Ascending aorta (tissue), 2 donors: ENCODE measurements at regions of chr1 and their contacts with region 1.

Region 1: DNA sequence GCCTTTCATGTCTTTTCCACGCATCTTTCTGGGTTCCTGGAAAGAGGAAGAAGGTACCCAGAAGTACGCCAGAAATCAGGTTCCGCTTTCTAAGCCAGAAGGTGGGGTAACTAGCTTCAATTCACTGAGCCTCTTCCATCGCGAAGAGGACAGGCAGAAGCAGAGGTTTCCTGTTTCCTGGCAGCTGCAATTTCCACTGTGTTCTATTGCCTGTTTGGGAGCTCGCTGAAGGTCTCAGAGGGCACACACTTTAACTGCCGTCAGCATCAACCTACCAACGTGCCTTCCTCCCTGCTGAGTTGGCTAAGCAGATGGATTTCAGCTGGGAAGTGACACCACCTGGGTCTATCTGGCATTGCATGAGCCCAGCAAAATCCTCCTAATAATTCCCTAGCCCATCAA is 10.0 kb downstream of the NCF2 start:
- DNase-seq: peak; percentile 27 to 65
- H3K4me3 ChIP-seq: no peak overlapping the region
- H3K27ac ChIP-seq: peak overlapping the region in 1 of 2 donors; percentile 14
- H3K4me1 ChIP-seq: peaks cover 18 to 29% of the 10 kb centered on the region in 2 donors
- H3K27me3 ChIP-seq: no peaks in the 10 kb centered on the region
- CTCF ChIP-seq: no peak

Region 2: DNA sequence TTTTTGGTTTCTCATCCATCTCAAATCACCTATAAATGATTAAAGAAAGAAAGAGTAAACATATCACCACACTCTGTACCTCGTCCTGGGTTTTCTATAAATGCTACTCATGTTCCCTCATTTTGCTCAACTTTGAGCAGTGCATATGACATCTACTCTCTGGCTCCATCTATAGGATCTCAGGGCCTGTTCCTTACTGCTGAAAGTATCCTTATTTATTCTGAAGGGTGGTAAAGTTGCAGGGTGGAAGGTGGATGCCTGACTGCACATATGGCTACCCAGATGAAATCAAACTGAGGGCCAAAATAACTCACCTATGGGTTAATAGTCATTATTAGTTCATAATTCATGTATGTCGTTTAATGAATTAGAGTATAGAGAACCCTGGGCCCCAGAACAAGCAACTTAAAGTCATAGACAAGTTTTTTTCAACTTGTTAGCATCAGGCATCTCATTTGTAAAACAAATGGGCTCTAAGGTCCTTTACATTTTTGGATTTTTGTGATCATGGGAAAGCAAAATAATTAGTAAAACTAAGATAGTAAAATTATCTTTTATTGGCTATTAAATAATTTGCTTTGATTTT is 36.6 kb before region 1 on chr1:
- intact Hi-C with region 1: loop called (anchors 2 kb)
- DNase-seq: no peak
- H3K4me3 ChIP-seq: no peak overlapping the region
- H3K27ac ChIP-seq: no peak overlapping the region
- H3K4me1 ChIP-seq: no peaks in the 10 kb centered on the region
- H3K27me3 ChIP-seq: no peaks in the 10 kb centered on the region
- CTCF ChIP-seq: peak in 2 of 3 experiments; percentile 48 to 56